ENCODE measurements at regions of chr6 and their contacts with region 1.

Region 1: DNA sequence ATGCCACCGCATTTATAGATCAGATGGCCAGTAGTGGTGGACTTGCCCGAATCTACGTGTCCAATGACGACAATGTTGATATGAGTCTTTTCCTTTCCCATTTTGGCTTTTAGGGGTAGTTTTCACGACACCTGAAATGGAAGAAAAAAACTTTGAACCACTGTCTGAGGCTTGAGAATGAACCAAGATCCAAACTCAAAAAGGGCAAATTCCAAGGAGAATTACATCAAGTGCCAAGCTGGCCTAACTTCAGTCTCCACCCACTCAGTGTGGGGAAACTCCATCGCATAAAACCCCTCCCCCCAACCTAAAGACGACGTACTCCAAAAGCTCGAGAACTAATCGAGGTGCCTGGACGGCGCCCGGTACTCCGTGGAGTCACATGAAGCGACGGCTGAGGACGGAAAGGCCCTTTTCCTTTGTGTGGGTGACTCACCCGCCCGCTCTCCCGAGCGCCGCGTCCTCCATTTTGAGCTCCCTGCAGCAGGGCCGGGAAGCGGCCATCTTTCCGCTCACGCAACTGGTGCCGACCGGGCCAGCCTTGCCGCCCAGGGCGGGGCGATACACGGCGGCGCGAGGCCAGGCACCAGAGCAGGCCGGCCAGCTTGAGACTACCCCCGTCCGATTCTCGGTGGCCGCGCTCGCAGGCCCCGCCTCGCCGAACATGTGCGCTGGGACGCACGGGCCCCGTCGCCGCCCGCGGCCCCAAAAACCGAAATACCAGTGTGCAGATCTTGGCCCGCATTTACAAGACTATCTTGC is 725 bp downstream of the EEF1A1 start:
- DNase-seq: peak; percentile 75 to 88 (median 83)
- ATAC-seq: peak; percentile 45
- H3K4me3 ChIP-seq: peak overlapping the region; percentile 94
- H3K4me1 ChIP-seq: peaks cover 29% of the 10 kb centered on the region
- CTCF ChIP-seq: no peak

Region 2: DNA sequence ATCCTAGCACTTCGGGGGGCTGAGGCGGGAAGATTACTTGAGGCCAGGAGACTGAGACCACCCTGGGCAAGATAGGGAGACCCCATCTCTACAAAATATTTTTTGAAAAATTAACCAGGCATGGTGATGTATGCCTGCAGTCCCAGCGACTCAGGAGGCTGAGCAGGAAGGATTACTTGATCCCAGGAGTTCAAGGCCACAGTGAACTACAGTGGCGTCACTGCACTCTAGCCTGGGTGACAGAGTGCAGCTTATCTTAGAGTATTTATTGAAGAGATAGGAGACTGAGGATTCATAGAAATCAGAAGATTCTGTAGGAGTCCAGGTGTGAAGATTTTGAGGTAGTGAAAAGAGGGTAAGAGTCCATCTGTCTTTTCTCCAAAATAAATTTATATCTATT is 88.7 kb after region 1 on chr6:
- intact Hi-C with region 1: loop called in 1 of 2 experiments (anchors 5 kb)
- DNase-seq: no peak
- ATAC-seq: no peak
- H3K4me3 ChIP-seq: no peak overlapping the region
- H3K4me1 ChIP-seq: no peaks in the 10 kb centered on the region
- CTCF ChIP-seq: no peak

Region 3: DNA sequence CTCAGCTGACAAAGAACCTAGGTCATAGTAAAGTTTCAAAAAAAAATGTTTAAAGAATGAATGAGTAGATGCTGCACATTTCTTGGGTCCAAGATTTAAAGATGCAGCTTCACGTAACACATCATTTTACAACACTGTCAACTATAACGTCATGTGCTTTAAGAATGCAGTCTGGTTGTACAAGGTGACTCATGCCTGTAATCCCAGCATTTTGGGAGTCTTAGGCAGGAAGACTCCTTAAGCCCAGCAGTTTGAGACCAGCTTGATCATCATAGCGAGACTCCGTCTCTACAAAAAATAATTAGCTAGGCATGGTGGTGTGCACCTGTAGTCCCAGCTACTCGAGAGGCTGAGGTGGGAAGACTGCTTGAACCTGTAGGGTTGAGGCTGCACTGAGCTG is 111.7 kb after region 1 on chr6:
- intact Hi-C with region 1: no loop called
- DNase-seq: no peak
- ATAC-seq: no peak
- H3K4me3 ChIP-seq: no peak overlapping the region
- H3K4me1 ChIP-seq: no peaks in the 10 kb centered on the region
- CTCF ChIP-seq: no peak